HepG2 (cell line): ENCODE measurements at regions of chr5 and their contacts with region 1.

Region 1: GRCh38 chr5:65913519-65913918 is 12.9 kb upstream of the ERBIN start:
- DNase-seq: peak; percentile 63
- ATAC-seq: peak; percentile 96
- H3K4me3 ChIP-seq: no peak overlapping the region
- H3K27ac ChIP-seq: no peak overlapping the region
- H3K4me1 ChIP-seq: peaks cover 26% of the 10 kb centered on the region
- H3K27me3 ChIP-seq: no peaks in the 10 kb centered on the region
- CTCF ChIP-seq: no peak
- EP300 ChIP-seq: no peak
- POLR2A ChIP-seq: no peak
- RAD21 ChIP-seq: no peak

Region 2: GRCh38 chr5:65861830-65862241 is 51.7 kb before region 1 on chr5:
- CTCF ChIA-PET with region 1: no interaction called
- POLR2A ChIA-PET with region 1: no interaction called
- in situ Hi-C with region 1: no loop called
- intact Hi-C with region 1: loop called (anchors 5 kb)
- DNase-seq: no peak
- ATAC-seq: no peak
- H3K4me3 ChIP-seq: no peak overlapping the region
- H3K27ac ChIP-seq: no peak overlapping the region
- H3K4me1 ChIP-seq: no peaks in the 10 kb centered on the region; the same call in 1 of the 2 replicates
- H3K27me3 ChIP-seq: no peaks in the 10 kb centered on the region
- CTCF ChIP-seq: no peak
- EP300 ChIP-seq: no peak
- POLR2A ChIP-seq: no peak
- RAD21 ChIP-seq: no peak